ENCODE measurements at regions of chr19 and their contacts with region 1.

Region 1: GRCh38 chr19:40633207-40633606 is 32.0 kb downstream of the LTBP4 start:
- DNase-seq: no peak
- H3K4me3 Mint-ChIP-seq: no peak overlapping the region
- H3K27ac Mint-ChIP-seq: no peak overlapping the region
- H3K4me1 Mint-ChIP-seq: peaks cover 11% of the 10 kb centered on the region
- H3K27me3 Mint-ChIP-seq: peaks cover 13% of the 10 kb centered on the region

Region 2: GRCh38 chr19:40257057-40257517 is 376.1 kb before region 1 on chr19:
- intact Hi-C with region 1: no loop called
- DNase-seq: no peak
- H3K4me3 Mint-ChIP-seq: no peak overlapping the region
- H3K27ac Mint-ChIP-seq: no peak overlapping the region
- H3K4me1 Mint-ChIP-seq: peaks cover 7% of the 10 kb centered on the region
- H3K27me3 Mint-ChIP-seq: no peaks in the 10 kb centered on the region

Region 3: DNA sequence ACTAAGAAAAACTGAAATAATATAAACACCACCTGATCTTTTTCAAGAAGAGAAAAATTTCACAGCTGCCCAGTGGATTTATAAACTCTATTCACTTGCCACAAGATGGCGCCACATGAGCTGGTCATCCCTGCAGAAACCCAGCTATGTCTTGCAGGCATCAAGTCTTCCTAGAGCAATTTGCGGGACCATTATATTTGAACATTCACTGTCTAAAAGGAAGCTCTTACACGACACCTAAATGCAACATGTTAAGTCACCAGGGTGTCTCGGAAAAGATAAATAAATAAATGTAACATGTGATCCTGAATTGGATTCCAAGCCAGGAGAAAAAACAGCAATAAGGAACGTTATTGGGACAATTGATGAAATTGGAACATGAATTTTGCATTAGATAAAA is 327.8 kb before region 1 on chr19:
- intact Hi-C with region 1: loop called (anchors 1 kb)
- DNase-seq: peak; percentile 56
- H3K4me3 Mint-ChIP-seq: no peak overlapping the region
- H3K27ac Mint-ChIP-seq: no peak overlapping the region
- H3K4me1 Mint-ChIP-seq: no peaks in the 10 kb centered on the region
- H3K27me3 Mint-ChIP-seq: no peaks in the 10 kb centered on the region

Region 4: GRCh38 chr19:40549007-40549708 is 84.0 kb before region 1 on chr19:
- intact Hi-C with region 1: loop called (anchors 1 kb)
- DNase-seq: peak; percentile 63
- H3K4me3 Mint-ChIP-seq: no peak overlapping the region
- H3K27ac Mint-ChIP-seq: no peak overlapping the region
- H3K4me1 Mint-ChIP-seq: peaks cover 4% of the 10 kb centered on the region
- H3K27me3 Mint-ChIP-seq: peaks cover 45% of the 10 kb centered on the region

Region 5: GRCh38 chr19:40614622-40615411 is 18.4 kb before region 1 on chr19:
- intact Hi-C with region 1: loop called (anchors 1 kb)
- DNase-seq: peak; percentile 75
- H3K4me3 Mint-ChIP-seq: peak overlapping the region; percentile 97
- H3K27ac Mint-ChIP-seq: peak overlapping the region; percentile 100
- H3K4me1 Mint-ChIP-seq: peaks cover 41% of the 10 kb centered on the region
- H3K27me3 Mint-ChIP-seq: no peaks in the 10 kb centered on the region